CD14-positive monocyte (primary cell): ENCODE measurements at regions of chr6 and their contacts with region 1.

Region 1: DNA sequence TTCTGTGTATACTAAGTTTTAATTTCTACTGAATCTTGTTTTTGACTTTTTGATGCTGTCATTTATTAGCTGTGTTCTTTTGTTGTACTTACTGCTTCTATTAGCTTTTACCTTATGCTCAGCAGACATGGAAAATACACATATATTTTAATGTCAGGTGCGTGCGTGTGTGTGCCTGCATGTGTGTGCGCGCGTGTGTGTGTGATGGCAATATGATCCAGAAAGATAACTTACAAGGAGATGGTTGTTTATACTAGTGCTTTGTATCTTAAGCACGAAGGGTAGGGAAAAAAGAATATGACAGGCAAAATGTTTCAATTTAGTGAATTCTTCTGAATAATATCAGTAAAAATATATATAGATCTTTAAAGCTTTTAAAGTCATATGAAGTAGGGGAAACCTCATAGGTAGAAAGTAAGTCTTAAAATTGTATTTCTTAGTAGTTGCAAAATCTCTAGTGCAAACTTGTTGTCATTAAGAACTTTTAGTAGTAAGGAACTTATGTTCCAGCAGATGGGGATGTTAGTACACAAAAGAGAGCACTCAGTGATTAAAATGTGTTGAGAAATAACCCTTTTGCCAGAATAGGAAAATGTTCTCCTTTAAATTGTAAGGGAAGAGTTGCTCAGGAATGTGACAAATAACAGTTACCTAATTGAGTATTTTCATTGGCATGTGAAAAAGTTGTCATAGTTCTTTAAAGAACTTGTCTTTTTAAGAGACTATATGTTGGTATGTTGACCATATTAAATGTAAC is 13.2 kb downstream of the QKI start:
- DNase-seq: peak in 2 of 3 donors; percentile 46 to 47
- H3K4me3 ChIP-seq: no peak overlapping the region
- H3K4me3 Mint-ChIP-seq: no peak overlapping the region
- H3K27ac ChIP-seq: no peak overlapping the region
- H3K27ac Mint-ChIP-seq: peak overlapping the region in 3 of 7 donors; percentile 28 to 67 (median 37)
- H3K4me1 ChIP-seq: peaks cover 15 to 33% of the 10 kb centered on the region in 2 donors
- H3K4me1 Mint-ChIP-seq: peaks cover 68% of the 10 kb centered on the region
- H3K27me3 ChIP-seq: no peaks in the 10 kb centered on the region
- H3K27me3 Mint-ChIP-seq: no peaks in the 10 kb centered on the region
- CTCF ChIP-seq: peak; percentile 56

Region 2: GRCh38 chr6:163438940-163439335 is 11.3 kb after region 1 on chr6:
- intact Hi-C with region 1: loop called in 1 of 2 experiments (anchors 2 kb)
- DNase-seq: no peak
- H3K4me3 ChIP-seq: no peak overlapping the region
- H3K4me3 Mint-ChIP-seq: no peak overlapping the region
- H3K27ac ChIP-seq: no peak overlapping the region
- H3K27ac Mint-ChIP-seq: peak overlapping the region in 2 of 7 donors; percentile 44 to 57
- H3K4me1 ChIP-seq: peaks cover 3 to 40% of the 10 kb centered on the region in 2 donors
- H3K4me1 Mint-ChIP-seq: peaks cover 51% of the 10 kb centered on the region
- H3K27me3 ChIP-seq: no peaks in the 10 kb centered on the region
- H3K27me3 Mint-ChIP-seq: peaks cover 0 to 2% (median 0%) of the 10 kb centered on the region in 3 donors
- CTCF ChIP-seq: no peak

Region 3: GRCh38 chr6:163554663-163555062 is 127.0 kb after region 1 on chr6:
- intact Hi-C with region 1: loop called in 1 of 2 experiments (anchors 10 kb)
- DNase-seq: peak; percentile 32 to 55 (median 52)
- H3K4me3 ChIP-seq: no peak overlapping the region
- H3K4me3 Mint-ChIP-seq: no peak overlapping the region
- H3K27ac ChIP-seq: peak overlapping the region in 1 of 2 donors; percentile 27
- H3K27ac Mint-ChIP-seq: peak overlapping the region in 4 of 7 donors; percentile 25 to 74 (median 45)
- H3K4me1 ChIP-seq: no peaks in the 10 kb centered on the region
- H3K4me1 Mint-ChIP-seq: peaks cover 3% of the 10 kb centered on the region
- H3K27me3 ChIP-seq: no peaks in the 10 kb centered on the region
- H3K27me3 Mint-ChIP-seq: peaks cover 0 to 1% (median 0%) of the 10 kb centered on the region in 3 donors
- CTCF ChIP-seq: peak; percentile 71

Region 4: GRCh38 chr6:163956571-163957407 is 529.1 kb after region 1 on chr6:
- intact Hi-C with region 1: loop called in 1 of 2 experiments (anchors 10 kb)
- DNase-seq: peak; percentile 60 to 74 (median 69)
- H3K4me3 ChIP-seq: no peak overlapping the region
- H3K4me3 Mint-ChIP-seq: no peak overlapping the region
- H3K27ac ChIP-seq: no peak overlapping the region
- H3K27ac Mint-ChIP-seq: no peak overlapping the region
- H3K4me1 ChIP-seq: no peaks in the 10 kb centered on the region
- H3K4me1 Mint-ChIP-seq: peaks cover 3% of the 10 kb centered on the region
- H3K27me3 ChIP-seq: peaks cover 22 to 39% of the 10 kb centered on the region in 2 donors
- H3K27me3 Mint-ChIP-seq: peaks cover 27 to 51% (median 28%) of the 10 kb centered on the region in 3 donors
- CTCF ChIP-seq: peak; percentile 89